Naive thymus-derived CD8-positive, alpha-beta T cell (primary cell): ENCODE measurements at regions of chr17 and their contacts with region 1.

Region 1: GRCh38 chr17:41966463-41967140 is at the start of gene CNP:
- DNase-seq: peak; percentile 82 to 96 (median 90)
- ATAC-seq: peak; percentile 82
- H3K4me3 Mint-ChIP-seq: peak within 1 kb of the TSS; percentile 80 to 94 (median 88)
- H3K27ac Mint-ChIP-seq: peak within 1 kb of the TSS; percentile 82 to 97 (median 93)
- H3K4me1 Mint-ChIP-seq: peaks cover 14 to 51% (median 49%) of the 10 kb centered on the region in 4 donors
- H3K27me3 Mint-ChIP-seq: no peaks in the 10 kb centered on the region
- polyA plus RNA-seq, gene CNP: 27.0 to 33.6 (median 27.5) TPM

Region 2: DNA sequence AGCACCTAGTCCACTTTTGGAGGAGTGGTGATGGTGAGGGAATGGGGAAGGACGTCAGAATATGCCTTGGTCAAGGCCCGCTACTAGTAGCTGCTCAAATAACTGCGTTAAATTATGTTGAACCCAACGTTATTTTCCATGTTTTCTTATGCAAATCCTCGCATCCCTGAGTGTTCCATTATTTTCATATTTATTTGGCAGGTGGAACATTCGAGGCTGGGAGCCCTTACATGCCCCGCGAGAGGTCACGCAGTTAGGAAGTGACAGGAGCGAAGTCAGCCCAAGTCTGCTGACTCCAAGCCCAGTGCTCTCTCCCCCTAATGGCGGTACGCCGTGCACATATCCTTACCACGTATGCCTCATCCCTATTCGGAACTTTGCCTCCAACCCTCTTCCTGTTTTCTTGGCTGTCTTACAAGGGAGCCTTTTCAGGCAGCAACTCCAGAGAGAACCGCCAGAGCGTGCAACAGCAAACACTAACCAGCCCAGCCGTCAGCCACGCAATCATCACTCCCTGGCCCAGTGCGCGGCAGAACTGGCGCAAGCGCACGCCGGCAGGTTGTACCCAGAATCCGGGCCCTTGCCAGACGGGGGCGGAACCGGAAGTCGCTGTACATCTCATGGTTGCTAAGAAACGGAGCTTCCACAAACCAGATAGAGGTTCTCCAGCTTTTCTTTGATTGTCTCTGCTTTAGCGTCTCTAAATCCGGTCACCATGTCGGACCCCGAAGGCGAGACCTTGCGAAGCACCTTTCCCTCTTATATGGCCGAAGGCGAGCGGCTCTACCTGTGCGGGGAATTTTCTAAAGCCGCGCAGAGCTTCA is 36.4 kb before region 1 on chr17 and contains the start of gene ODAD4:
- POLR2A ChIA-PET with region 1: interaction called, 17 read pairs
- DNase-seq: peak; percentile 92 to 97 (median 96)
- ATAC-seq: peak; percentile 97 to 98
- H3K4me3 Mint-ChIP-seq: peak within 1 kb of the TSS; percentile 91 to 98 (median 96)
- H3K27ac Mint-ChIP-seq: peak within 1 kb of the TSS; percentile 95 to 99 (median 98)
- H3K4me1 Mint-ChIP-seq: peaks cover 14 to 28% (median 26%) of the 10 kb centered on the region in 4 donors
- H3K27me3 Mint-ChIP-seq: no peaks in the 10 kb centered on the region
- polyA plus RNA-seq, gene ODAD4: 0.08 to 0.09 TPM in 2 of 3 donors, not detected in the other

Region 3: DNA sequence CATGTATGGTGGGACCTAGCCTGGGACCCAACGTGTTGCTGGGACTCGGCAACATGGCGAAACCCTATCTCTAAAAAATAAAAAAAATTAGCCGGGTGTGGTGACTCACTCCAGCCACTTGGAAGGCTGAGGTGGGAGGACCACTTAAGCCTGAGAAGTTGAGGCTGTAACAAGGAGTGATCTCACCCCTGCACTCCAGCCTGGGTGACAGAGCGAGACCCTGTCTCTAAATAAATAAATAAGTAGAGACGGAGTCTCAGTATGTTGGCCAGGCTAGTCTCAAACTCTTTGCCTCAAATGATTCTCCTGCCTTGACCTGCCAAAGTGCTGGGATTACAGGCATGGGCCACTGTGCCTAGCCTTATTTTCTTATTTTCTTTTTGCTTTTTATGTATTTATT is 10.1 kb before region 1 on chr17:
- POLR2A ChIA-PET with region 1: no interaction called
- DNase-seq: no peak
- ATAC-seq: no peak
- H3K4me3 Mint-ChIP-seq: no peak overlapping the region
- H3K27ac Mint-ChIP-seq: peak overlapping the region in 1 of 10 donors; percentile 15
- H3K4me1 Mint-ChIP-seq: no peaks in the 10 kb centered on the region
- H3K27me3 Mint-ChIP-seq: no peaks in the 10 kb centered on the region

Region 4: GRCh38 chr17:42112552-42113176 is 146.1 kb after region 1 on chr17 and contains the start of gene DHX58:
- POLR2A ChIA-PET with region 1: interaction called, 16 read pairs
- DNase-seq: peak; percentile 56 to 87 (median 76)
- ATAC-seq: peak; percentile 88
- H3K4me3 Mint-ChIP-seq: peak within 1 kb of the TSS; percentile 86 to 98 (median 93)
- H3K27ac Mint-ChIP-seq: peak within 1 kb of the TSS; percentile 93 to 100 (median 97)
- H3K4me1 Mint-ChIP-seq: peaks cover 22 to 67% (median 60%) of the 10 kb centered on the region in 4 donors
- H3K27me3 Mint-ChIP-seq: no peaks in the 10 kb centered on the region
- polyA plus RNA-seq, gene DHX58: 7.3 to 21.7 (median 13.6) TPM

Region 5: DNA sequence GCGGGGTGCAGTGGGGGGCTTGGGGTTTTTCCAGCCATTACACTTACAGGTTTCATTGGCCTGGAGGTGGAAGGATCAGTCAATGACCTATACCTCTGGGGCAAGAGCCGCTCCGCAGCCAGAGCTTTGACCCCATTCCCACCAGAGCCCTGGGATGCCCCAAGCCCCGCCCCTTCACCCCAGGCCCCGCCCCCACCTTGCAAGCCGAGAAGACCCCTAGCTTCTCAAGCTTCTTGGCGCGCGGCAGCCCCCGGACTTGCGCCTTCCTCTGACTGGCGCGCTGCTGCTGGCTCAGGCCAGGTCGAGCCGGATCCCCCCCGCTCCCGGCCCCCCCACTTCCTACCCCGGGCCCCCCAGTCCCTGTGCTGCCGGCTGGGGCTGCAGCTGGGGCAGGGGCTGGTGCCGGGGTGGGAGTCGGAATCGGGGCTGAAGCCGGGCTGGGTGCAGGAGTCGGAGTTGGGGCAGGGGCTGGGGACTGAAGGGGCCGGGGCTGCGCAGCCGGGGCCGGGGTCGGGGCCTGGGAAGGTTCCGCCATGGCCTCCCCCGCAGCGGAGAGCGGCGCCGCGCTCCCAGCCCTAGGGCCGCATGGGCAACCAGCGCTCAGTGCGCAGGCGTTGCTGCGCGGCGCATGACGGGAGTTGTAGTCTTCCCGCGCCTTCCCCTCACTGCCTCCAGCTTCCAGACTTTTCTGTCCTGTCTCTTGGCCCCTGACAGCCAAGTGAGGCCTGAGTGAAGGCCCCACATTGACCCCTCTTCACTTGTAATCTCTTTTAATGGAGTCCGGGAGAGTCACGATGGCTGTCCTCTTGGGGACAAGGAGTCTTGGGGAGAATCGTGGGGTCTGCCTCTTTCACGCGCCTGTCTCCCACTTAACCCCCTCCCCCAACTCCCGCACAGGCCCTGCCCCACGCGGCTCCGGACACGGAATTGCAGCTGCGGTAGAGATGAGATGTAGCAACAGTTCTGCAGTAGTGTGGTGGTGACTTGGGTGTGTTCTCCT is 154.5 kb after region 1 on chr17 and contains the start of gene KAT2A:
- POLR2A ChIA-PET with region 1: interaction called, 24 read pairs
- DNase-seq: peak; percentile 56 to 83 (median 72)
- ATAC-seq: peak; percentile 91 to 95
- H3K4me3 Mint-ChIP-seq: peak within 1 kb of the TSS; percentile 68 to 85 (median 76)
- H3K27ac Mint-ChIP-seq: peak within 1 kb of the TSS; percentile 4 to 85 (median 72)
- H3K4me1 Mint-ChIP-seq: peaks cover 12 to 34% (median 28%) of the 10 kb centered on the region in 4 donors
- H3K27me3 Mint-ChIP-seq: no peaks in the 10 kb centered on the region
- polyA plus RNA-seq, gene KAT2A: 5.1 to 11.8 (median 8.8) TPM